Naive thymus-derived CD4-positive, alpha-beta T cell (primary cell): ENCODE measurements at regions of chr5 and their contacts with region 1.

Region 1: GRCh38 chr5:96807075-96807654 is 580 bp downstream of the ERAP1 start:
- DNase-seq: peak in 1 of 9 donors; percentile 67
- ATAC-seq: peak; percentile 17
- H3K4me3 ChIP-seq: peak overlapping the region; percentile 85
- H3K4me3 Mint-ChIP-seq: peak overlapping the region; percentile 90 to 100 (median 96)
- H3K27ac ChIP-seq: peak overlapping the region; percentile 99
- H3K27ac Mint-ChIP-seq: peak overlapping the region; percentile 98 to 100 (median 99)
- H3K4me1 ChIP-seq: peaks cover 40 to 69% of the 10 kb centered on the region in 2 donors
- H3K4me1 Mint-ChIP-seq: peaks cover 57 to 92% (median 89%) of the 10 kb centered on the region in 7 donors
- H3K27me3 ChIP-seq: no peaks in the 10 kb centered on the region
- H3K27me3 Mint-ChIP-seq: peaks cover 0 to 2% (median 0%) of the 10 kb centered on the region in 5 donors

Region 2: GRCh38 chr5:95822542-95823181 is 984.5 kb before region 1 on chr5 and contains the start of gene GLRX:
- CTCF ChIA-PET with region 1: no interaction called
- POLR2A ChIA-PET with region 1: interaction called, 4 read pairs
- intact Hi-C with region 1: loop called (anchors 5 to 10 kb)
- DNase-seq: peak in 8 of 9 donors; percentile 48 to 62 (median 58)
- ATAC-seq: peak; percentile 52
- H3K4me3 ChIP-seq: peak within 1 kb of the TSS; percentile 93
- H3K4me3 Mint-ChIP-seq: peak within 1 kb of the TSS; percentile 91 to 100 (median 99)
- H3K27ac ChIP-seq: peak within 1 kb of the TSS; percentile 84
- H3K27ac Mint-ChIP-seq: peak within 1 kb of the TSS; percentile 91 to 97 (median 95)
- H3K4me1 ChIP-seq: peaks cover 38% of the 10 kb centered on the region in 2 donors
- H3K4me1 Mint-ChIP-seq: peaks cover 53 to 78% (median 61%) of the 10 kb centered on the region in 7 donors
- H3K27me3 ChIP-seq: no peaks in the 10 kb centered on the region
- H3K27me3 Mint-ChIP-seq: no peaks in the 10 kb centered on the region
- total RNA-seq, gene GLRX: 26.3 to 89.5 (median 55.6) TPM

Region 3: DNA sequence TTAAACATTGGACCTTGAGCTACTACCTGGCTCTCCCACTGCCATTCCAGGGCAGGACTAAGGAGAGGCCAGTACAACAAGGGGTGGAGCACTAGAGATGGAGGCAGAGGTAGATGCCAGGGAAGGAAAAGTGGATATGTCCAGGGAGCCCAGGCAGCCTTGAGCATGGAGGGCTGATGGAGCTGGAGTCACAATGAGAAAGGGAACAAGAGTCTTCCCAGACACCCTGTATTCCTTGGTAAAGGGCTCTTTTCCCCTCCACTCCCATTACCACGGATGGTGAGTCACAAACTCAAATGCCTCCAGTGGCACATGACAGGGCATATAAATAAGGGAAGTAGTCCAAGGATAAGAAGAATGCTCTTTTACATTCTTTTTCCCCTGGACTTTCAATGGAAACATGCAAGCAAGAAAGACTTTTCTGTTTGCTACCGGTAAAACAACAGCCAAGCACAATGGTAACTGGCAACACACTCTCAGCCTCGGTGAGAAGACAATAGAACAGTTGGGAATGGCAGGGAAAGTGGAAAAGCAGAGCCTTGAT is 16.1 kb before region 1 on chr5:
- CTCF ChIA-PET with region 1: interaction called, 3 read pairs
- POLR2A ChIA-PET with region 1: interaction called, 36 read pairs
- intact Hi-C with region 1: loop called in 1 of 2 experiments (anchors 1 kb)
- DNase-seq: no peak
- ATAC-seq: peak; percentile 46
- H3K4me3 ChIP-seq: no peak overlapping the region
- H3K4me3 Mint-ChIP-seq: no peak overlapping the region
- H3K27ac ChIP-seq: peak overlapping the region; percentile 24
- H3K27ac Mint-ChIP-seq: peak overlapping the region; percentile 66 to 87 (median 72)
- H3K4me1 ChIP-seq: peaks cover 9 to 14% of the 10 kb centered on the region in 2 donors
- H3K4me1 Mint-ChIP-seq: peaks cover 19 to 51% (median 43%) of the 10 kb centered on the region in 7 donors
- H3K27me3 ChIP-seq: no peaks in the 10 kb centered on the region
- H3K27me3 Mint-ChIP-seq: no peaks in the 10 kb centered on the region

Region 4: DNA sequence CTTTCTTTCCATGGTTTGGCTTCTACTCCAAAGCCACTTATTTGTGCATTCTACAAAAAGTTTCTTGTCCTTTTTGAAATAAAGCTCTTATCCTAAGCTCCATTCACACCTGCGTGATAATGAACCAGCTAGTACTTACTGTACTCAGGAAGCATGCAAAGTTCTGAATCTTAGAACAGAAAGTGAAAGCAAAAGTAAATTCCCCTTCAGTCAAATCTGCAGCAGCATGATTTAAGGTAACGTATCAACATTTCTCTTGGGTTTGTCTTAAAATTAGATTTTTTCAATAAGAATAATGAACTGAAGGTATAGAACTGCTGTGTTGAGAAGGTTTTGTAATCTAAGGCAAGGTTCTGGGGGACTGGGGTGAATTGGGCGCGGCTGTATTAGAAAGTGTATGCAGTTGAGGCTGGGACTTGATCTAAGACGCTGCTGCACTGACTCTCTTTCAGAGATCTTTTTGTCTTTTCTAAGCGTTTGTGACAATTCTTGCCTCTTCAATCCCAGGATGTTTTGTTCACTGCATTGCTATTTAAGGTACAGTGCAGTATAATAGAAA is 69.2 kb after region 1 on chr5 and contains the start of gene ERAP2:
- CTCF ChIA-PET with region 1: interaction called, 5 read pairs
- POLR2A ChIA-PET with region 1: interaction called, 20 read pairs
- intact Hi-C with region 1: loop called in 1 of 2 experiments (anchors 1 kb)
- DNase-seq: peak in 7 of 9 donors; percentile 53 to 73 (median 64)
- ATAC-seq: peak; percentile 79
- H3K4me3 ChIP-seq: peak within 1 kb of the TSS; percentile 85
- H3K4me3 Mint-ChIP-seq: peak within 1 kb of the TSS; percentile 81 to 99 (median 96)
- H3K27ac ChIP-seq: peak within 1 kb of the TSS; percentile 80
- H3K27ac Mint-ChIP-seq: peak within 1 kb of the TSS; percentile 91 to 99 (median 97)
- H3K4me1 ChIP-seq: peaks cover 26 to 56% of the 10 kb centered on the region in 2 donors
- H3K4me1 Mint-ChIP-seq: peaks cover 44 to 76% (median 73%) of the 10 kb centered on the region in 7 donors
- H3K27me3 ChIP-seq: no peaks in the 10 kb centered on the region
- H3K27me3 Mint-ChIP-seq: no peaks in the 10 kb centered on the region
- total RNA-seq, gene ERAP2: 42.5 to 158 (median 97.2) TPM

Region 5: GRCh38 chr5:97094579-97095317 is 287.6 kb after region 1 on chr5:
- CTCF ChIA-PET with region 1: no interaction called
- POLR2A ChIA-PET with region 1: no interaction called
- intact Hi-C with region 1: loop called in 1 of 2 experiments (anchors 2 kb)
- DNase-seq: peak in 1 of 9 donors; percentile 28
- ATAC-seq: no peak
- H3K4me3 ChIP-seq: no peak overlapping the region
- H3K4me3 Mint-ChIP-seq: peak overlapping the region in 1 of 10 donors; percentile 62
- H3K27ac ChIP-seq: no peak overlapping the region
- H3K27ac Mint-ChIP-seq: peak overlapping the region in 1 of 9 donors; percentile 63
- H3K4me1 ChIP-seq: no peaks in the 10 kb centered on the region
- H3K4me1 Mint-ChIP-seq: peaks cover 0 to 20% (median 5%) of the 10 kb centered on the region in 7 donors
- H3K27me3 ChIP-seq: no peaks in the 10 kb centered on the region
- H3K27me3 Mint-ChIP-seq: peaks cover 0 to 43% (median 1%) of the 10 kb centered on the region in 5 donors

Region 6: DNA sequence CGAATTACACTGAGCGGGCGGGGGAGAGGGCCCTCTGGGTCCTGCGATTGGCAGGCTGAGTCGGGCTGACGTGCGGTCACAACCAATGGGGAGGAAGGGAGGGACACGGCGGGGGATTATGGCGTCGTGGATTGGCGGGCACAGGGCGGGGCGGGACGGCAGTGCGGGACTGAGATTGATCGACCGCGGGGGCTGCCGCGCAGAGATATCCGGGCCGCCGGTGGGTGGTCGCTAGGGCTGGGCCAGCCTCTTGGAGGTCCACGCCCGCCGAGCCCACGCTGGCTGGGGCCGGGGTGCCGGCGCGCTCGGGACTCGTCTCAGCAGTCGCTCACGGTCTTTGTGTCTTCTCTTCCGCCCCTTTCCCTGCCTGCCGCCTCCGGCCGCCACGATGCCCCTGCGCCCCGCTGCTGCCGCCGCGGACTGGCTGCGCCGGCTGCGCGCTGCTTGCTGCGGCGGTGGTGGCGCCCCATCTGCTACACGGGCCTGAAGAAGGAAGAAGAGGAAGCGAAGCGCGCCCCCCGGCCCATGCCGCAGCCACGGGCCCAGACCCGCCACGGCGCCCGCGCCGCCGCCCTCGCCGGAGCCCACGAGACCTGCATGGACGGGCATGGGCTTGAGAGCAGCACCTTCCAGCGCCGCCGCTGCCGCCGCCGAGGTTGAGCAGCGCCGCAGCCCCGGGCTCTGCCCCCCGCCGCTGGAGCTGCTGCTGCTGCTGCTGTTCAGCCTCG is 1966.5 kb after region 1 on chr5 and contains the start of gene RGMB:
- CTCF ChIA-PET with region 1: no interaction called
- POLR2A ChIA-PET with region 1: no interaction called
- intact Hi-C with region 1: loop called in 1 of 2 experiments (anchors 5 kb)
- DNase-seq: peak; percentile 63 to 93 (median 88)
- ATAC-seq: peak; percentile 92
- H3K4me3 ChIP-seq: peak within 1 kb of the TSS; percentile 88
- H3K4me3 Mint-ChIP-seq: peak within 1 kb of the TSS; percentile 89 to 100 (median 98)
- H3K27ac ChIP-seq: peak within 1 kb of the TSS; percentile 61
- H3K27ac Mint-ChIP-seq: peak within 1 kb of the TSS; percentile 75 to 98 (median 95)
- H3K4me1 ChIP-seq: peaks cover 19 to 28% of the 10 kb centered on the region in 2 donors
- H3K4me1 Mint-ChIP-seq: peaks cover 44 to 72% (median 65%) of the 10 kb centered on the region in 7 donors
- H3K27me3 ChIP-seq: peaks cover 0 to 4% of the 10 kb centered on the region in 2 donors
- H3K27me3 Mint-ChIP-seq: peaks cover 0 to 83% (median 7%) of the 10 kb centered on the region in 5 donors
- total RNA-seq, gene RGMB: 0.41 to 22.4 (median 18.7) TPM